ENCODE measurements at regions of chr11 and their contacts with region 1.

Region 1: GRCh38 chr11:36131721-36132397 is 157.4 kb downstream of the COMMD9 start:
- DNase-seq: peak; percentile 55
- H3K4me3 ChIP-seq: no peak overlapping the region
- H3K27ac ChIP-seq: peak overlapping the region; percentile 32 to 42
- H3K4me1 ChIP-seq: no peaks in the 10 kb centered on the region
- H3K27me3 ChIP-seq: no peaks in the 10 kb centered on the region
- CTCF ChIP-seq: peak in 3 of 4 experiments; percentile 51 to 58 (median 54)
- POLR2A ChIP-seq: no peak

Region 2: DNA sequence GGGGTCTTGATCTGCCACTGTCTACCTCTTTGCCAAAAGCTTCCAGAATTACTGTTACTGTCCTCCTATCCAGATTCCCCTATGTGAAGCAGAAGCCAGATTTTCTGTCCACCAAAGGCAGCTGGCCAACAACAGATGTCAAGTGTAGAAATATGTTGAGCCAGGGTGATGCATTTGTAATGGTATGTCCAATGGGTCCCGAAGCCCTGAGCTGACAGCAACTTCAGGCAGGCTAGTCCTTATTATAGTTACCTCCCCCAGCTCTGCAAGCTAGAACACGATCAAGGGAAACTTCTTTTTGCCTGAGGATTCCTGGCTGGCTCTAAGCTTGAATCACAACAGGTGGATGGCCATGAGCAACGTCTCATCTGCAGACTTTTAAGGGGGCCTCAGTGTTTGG is 616.6 kb before region 1 on chr11:
- intact Hi-C with region 1: no loop called
- DNase-seq: no peak
- H3K4me3 ChIP-seq: no peak overlapping the region
- H3K27ac ChIP-seq: no peak overlapping the region
- H3K4me1 ChIP-seq: no peaks in the 10 kb centered on the region
- H3K27me3 ChIP-seq: no peaks in the 10 kb centered on the region
- CTCF ChIP-seq: no peak
- POLR2A ChIP-seq: no peak

Region 3: DNA sequence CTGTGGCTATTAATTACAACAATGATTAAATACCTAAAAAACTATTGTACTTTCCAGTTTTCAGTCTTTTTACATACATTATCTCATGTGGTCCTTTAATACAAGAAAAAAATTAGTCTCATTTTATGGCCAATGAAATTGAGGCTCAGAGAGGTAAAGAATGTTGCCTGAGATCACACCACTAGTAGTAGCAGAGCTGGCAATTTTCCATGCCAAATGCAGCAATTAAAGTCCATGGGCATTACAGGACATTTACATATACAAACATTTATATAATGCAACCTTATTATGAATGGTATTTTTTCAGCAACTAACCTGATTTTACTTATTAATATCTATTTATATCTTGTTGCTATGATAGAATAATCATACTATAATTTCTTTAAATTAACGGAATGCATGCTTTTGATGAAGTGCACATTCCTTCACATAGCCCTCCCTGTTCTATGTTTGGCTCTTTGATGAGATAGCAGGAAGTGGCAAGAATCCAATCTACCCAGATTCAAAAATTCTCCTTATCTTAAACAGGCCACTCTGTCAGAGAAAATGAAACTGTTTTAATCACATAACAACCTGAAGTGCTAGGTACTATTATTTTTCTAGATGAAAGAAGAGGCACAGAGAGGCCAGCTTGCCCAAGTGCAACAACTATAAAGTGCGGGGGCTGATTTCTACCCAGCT is 308.9 kb before region 1 on chr11:
- intact Hi-C with region 1: loop called (anchors 5 kb)
- DNase-seq: no peak
- H3K4me3 ChIP-seq: no peak overlapping the region
- H3K27ac ChIP-seq: no peak overlapping the region
- H3K4me1 ChIP-seq: no peaks in the 10 kb centered on the region
- H3K27me3 ChIP-seq: no peaks in the 10 kb centered on the region
- CTCF ChIP-seq: no peak
- POLR2A ChIP-seq: no peak

Region 4: DNA sequence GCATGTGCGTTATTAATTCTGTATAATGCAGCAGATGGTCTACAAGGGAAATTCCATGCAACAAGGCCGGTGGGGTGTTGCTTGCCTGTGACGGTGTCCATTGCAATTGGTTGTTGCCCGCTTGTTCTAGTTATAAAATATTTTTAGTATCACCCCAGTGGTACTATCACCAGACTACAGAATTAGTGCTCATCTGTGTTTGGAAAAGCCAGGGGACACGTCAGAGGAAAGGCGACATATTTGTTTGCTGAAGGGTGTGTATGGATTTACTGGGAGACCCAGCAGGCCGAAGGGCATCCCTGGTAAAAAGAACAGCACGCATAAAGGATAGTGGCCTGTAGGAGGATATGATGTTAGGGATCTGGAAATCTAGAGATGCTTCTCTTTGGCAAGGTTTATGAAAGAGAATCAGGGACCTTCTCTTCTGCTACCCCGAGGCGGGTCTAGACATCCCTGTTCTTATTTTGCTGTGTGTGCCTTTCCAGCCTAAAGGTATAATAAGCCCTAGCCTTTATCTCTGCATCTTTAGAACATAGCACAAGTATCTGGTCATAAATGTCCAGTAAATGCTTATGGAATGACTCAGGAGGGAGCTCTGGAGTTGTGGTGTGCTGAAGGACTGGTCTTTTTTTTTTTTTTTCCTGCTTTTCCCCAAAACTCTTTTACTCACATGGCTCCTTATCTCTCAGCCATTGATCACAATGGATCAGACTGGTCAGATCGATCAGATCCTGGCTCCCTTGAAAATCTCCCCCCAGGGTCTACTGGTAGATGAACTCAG is 97.1 kb before region 1 on chr11:
- intact Hi-C with region 1: loop called (anchors 5 kb)
- DNase-seq: no peak
- H3K4me3 ChIP-seq: no peak overlapping the region
- H3K27ac ChIP-seq: peak overlapping the region; percentile 47 to 58
- H3K4me1 ChIP-seq: peaks cover 17% of the 10 kb centered on the region
- H3K27me3 ChIP-seq: no peaks in the 10 kb centered on the region
- CTCF ChIP-seq: no peak
- POLR2A ChIP-seq: no peak

Region 5: DNA sequence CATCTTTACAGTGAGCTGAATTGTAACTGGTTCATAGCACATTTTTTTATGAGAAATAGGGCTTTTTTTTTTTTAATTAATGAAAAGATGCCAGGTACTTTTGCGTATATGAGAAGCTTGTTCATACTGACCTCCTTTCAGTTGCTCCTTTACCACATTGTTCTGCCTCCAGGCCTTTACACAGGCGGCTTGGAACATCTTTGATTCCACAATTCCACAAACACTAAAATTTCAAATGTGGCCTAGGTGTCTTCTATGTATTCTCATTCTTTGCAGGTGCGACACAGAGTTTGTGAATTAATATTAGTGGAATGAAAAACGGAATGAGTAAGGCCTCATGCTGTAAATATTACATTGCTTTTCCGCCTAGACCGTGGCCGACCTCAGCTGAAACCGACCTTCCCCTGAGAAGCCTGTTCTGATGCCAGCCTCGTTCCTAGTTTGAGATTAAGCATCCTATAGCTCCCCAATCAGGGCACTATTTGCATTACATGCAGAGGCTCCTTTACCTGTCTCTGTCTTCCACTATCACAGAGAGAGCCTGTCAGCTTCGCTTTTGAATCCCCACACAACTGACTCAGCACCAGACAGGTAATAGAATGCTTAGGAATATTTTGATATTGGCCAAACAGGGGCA is 62.2 kb before region 1 on chr11:
- intact Hi-C with region 1: no loop called
- DNase-seq: peak; percentile 63
- H3K4me3 ChIP-seq: no peak overlapping the region
- H3K27ac ChIP-seq: no peak overlapping the region
- H3K4me1 ChIP-seq: no peaks in the 10 kb centered on the region
- H3K27me3 ChIP-seq: no peaks in the 10 kb centered on the region
- CTCF ChIP-seq: peak in 2 of 4 experiments; percentile 52 to 63
- POLR2A ChIP-seq: no peak

Region 6: DNA sequence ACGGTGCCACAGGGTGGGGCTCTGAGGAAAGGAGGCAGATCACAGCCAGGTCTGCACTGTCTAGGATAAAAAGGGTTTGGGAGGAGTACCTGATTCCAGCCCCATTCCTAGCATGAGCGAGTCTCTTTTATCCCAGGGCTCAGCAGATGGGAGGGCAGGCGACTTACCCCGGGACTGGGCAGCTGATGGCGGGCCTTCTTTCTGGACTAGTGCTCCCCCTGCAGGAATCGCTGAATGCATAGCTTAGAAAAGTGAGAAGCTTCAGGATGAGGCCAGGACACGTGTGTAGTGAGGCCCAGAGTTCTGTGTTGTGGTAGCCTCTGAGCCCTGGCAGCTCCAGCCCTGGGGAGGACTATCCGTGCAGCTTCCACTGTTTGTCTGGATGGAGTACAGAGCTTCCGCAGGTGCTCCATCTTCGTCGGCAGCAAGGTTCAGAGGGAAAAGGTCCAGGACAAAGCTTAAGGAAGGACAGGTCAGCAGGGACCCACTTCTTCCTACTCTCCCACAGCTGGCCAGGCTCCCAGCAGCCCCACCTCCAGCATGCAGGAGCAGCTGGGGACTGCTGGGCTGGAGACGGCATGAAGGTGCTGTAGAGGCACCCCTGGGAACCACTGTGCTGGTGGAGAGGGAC is 127.0 kb after region 1 on chr11:
- intact Hi-C with region 1: loop called (anchors 5 kb)
- DNase-seq: peak; percentile 25
- H3K4me3 ChIP-seq: no peak overlapping the region
- H3K27ac ChIP-seq: no peak overlapping the region
- H3K4me1 ChIP-seq: no peaks in the 10 kb centered on the region
- H3K27me3 ChIP-seq: no peaks in the 10 kb centered on the region
- CTCF ChIP-seq: peak in 3 of 4 experiments; percentile 38 to 53 (median 44)
- POLR2A ChIP-seq: no peak

Measured in prostate gland (tissue), 2 donors.